H1 (cell line): ENCODE measurements at regions of chr6 and their contacts with region 1.

Region 1: GRCh38 chr6:30102970-30103874 is 9.7 kb downstream of the TRIM31 start:
- DNase-seq: peak in 1 of 2 experiments; percentile 88
- H3K4me3 ChIP-seq: peak overlapping the region; percentile 34 to 65 (median 58); a peak in 7 of 8 replicates
- H3K27ac ChIP-seq: no peak overlapping the region
- H3K4me1 ChIP-seq: peaks cover 3 to 15% (median 9%) of the 10 kb centered on the region in 4 experiments; a peak in 6 of 7 replicates
- H3K27me3 ChIP-seq: peaks cover 32 to 62% (median 55%) of the 10 kb centered on the region in 4 experiments
- CTCF ChIP-seq: peak; percentile 88 to 95 (median 94)
- EP300 ChIP-seq: no peak; a peak in 1 of 3 replicates
- POLR2A ChIP-seq: no peak
- RAD21 ChIP-seq: peak; percentile 90 to 92

Region 2: DNA sequence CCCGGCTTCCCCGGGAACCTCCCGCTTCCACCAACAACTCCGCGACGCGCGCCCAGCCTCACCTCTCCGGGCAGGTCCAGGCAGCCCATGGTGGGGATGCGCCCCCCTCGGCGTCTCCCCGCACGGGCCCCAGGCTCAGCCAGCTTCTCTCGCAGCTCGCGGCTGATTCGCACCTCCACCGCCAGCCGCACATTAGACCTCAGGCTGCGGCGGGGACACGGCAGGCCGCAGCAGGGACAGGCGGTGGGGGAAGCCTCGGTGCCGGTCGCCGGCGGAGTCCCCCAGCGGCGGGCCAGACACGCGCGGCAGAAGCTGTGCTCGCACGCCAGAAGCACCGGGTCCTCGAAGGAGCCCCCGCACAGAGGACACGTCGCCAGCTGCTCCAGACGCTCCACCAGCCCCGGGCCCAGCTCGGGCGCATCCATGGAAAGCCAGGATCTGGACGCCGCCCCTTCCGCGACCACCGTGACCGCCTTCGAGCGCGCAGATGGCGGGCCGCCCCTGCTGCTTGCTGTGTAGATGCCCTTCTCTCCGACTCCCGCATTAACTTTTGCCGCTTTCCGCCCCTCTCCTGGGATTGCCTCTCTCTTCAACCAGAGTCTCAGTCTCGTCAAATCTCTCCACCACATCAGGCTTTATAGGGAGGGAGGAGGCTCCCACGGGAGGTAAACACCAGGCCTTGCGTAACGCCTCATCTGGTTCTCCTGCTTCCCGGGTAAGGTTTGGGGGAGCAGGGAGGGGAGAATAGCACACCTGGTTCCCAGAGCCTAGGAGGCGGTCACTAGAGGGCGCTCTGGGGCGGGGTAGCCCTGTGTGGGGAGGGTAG is 27.8 kb before region 1 on chr6 and contains the start of gene RNF39:
- CTCF ChIA-PET with region 1: interaction called, 14 read pairs
- POLR2A ChIA-PET with region 1: interaction called, 3 read pairs
- DNase-seq: peak in 1 of 2 experiments; percentile 91
- H3K4me3 ChIP-seq: peak within 1 kb of the TSS; percentile 52 to 82 (median 72)
- H3K27ac ChIP-seq: no peak within 1 kb of the TSS
- H3K4me1 ChIP-seq: peaks cover 10 to 30% (median 14%) of the 10 kb centered on the region in 4 experiments; a peak in 6 of 7 replicates
- H3K27me3 ChIP-seq: peaks cover 41 to 70% (median 59%) of the 10 kb centered on the region in 4 experiments
- CTCF ChIP-seq: peak; percentile 65 to 83 (median 81)
- EP300 ChIP-seq: no peak
- POLR2A ChIP-seq: no peak
- RAD21 ChIP-seq: peak; percentile 36 to 47; a peak in 3 of 4 replicates
- total RNA-seq, gene RNF39: 1.4 and 1.7 TPM in 2 replicates

Region 3: GRCh38 chr6:30091577-30092381 is 11.4 kb before region 1 on chr6:
- CTCF ChIA-PET with region 1: interaction called, 23 read pairs
- POLR2A ChIA-PET with region 1: interaction called, 9 read pairs
- DNase-seq: no peak
- H3K4me3 ChIP-seq: no peak overlapping the region
- H3K27ac ChIP-seq: no peak overlapping the region
- H3K4me1 ChIP-seq: peaks cover 0 to 5% (median 0%) of the 10 kb centered on the region in 4 experiments; a peak in 2 of 7 replicates
- H3K27me3 ChIP-seq: peaks cover 0 to 11% (median 0%) of the 10 kb centered on the region in 4 experiments; a peak in 3 of 7 replicates
- CTCF ChIP-seq: no peak
- EP300 ChIP-seq: no peak
- POLR2A ChIP-seq: no peak
- RAD21 ChIP-seq: no peak

Region 4: GRCh38 chr6:30169658-30170614 is 66.7 kb after region 1 on chr6:
- CTCF ChIA-PET with region 1: interaction called, 22 read pairs
- POLR2A ChIA-PET with region 1: no interaction called
- DNase-seq: no peak
- H3K4me3 ChIP-seq: no peak overlapping the region
- H3K27ac ChIP-seq: no peak overlapping the region
- H3K4me1 ChIP-seq: peaks cover 0 to 4% (median 3%) of the 10 kb centered on the region in 4 experiments; a peak in 4 of 7 replicates
- H3K27me3 ChIP-seq: peaks cover 7 to 32% (median 26%) of the 10 kb centered on the region in 4 experiments
- CTCF ChIP-seq: peak in 2 of 3 experiments; percentile 68 to 81; a peak in 3 of 4 replicates
- EP300 ChIP-seq: no peak
- POLR2A ChIP-seq: no peak
- RAD21 ChIP-seq: peak; percentile 82 to 83